Natural killer cell (primary cell): ENCODE measurements at regions of chr15 and their contacts with region 1.

Region 1: DNA sequence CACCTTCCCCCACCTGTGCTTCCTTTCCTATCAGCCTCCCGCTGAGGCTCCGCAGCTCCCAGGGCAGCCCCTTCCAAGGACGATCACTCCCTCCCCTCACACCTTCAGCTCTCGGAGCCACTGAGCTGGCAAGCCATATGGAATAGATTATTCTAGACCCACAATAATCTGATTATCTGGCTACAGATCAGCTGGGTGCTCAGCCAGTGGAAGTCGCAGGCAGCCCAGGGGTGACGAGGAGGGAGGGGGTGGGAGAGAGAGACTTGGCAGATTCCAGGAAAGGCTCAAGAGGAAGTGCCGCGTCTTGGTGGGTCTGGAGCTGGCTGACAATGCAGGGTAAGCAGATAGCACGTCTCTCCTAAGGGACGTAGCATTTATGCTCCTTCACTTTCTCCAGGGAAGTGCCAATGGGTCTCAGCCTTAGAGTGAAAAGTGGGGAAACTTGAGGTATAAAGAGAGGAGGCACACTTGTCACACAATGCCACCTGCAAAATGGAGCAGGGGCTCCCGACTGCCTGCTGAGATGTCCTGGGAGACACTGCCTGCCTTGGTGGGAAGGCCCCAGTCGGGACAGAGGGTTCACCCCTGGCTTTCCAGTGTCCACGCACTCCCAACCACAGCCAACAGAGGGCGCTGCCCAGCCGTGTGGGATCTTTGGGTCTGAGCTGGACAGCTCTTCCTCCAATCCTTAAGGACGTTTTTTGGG is 9.4 kb upstream of the MESP1 start:
- DNase-seq: peak; percentile 73 to 76
- ATAC-seq: peak; percentile 85 to 94 (median 91)
- H3K4me3 ChIP-seq: no peak overlapping the region
- H3K4me3 Mint-ChIP-seq: no peak overlapping the region
- H3K27ac ChIP-seq: no peak overlapping the region
- H3K27ac Mint-ChIP-seq: no peak overlapping the region
- H3K4me1 ChIP-seq: no peaks in the 10 kb centered on the region
- H3K4me1 Mint-ChIP-seq: peaks cover 0 to 4% of the 10 kb centered on the region in 2 donors
- H3K27me3 ChIP-seq: no peaks in the 10 kb centered on the region
- H3K27me3 Mint-ChIP-seq: peaks cover 0 to 7% of the 10 kb centered on the region in 2 donors
- CTCF ChIP-seq: peak; percentile 86

Region 2: GRCh38 chr15:89874926-89875564 is 114.6 kb after region 1 on chr15:
- intact Hi-C with region 1: loop called (anchors 2 kb)
- DNase-seq: peak; percentile 72 to 89
- ATAC-seq: peak; percentile 98 to 100 (median 100)
- H3K4me3 ChIP-seq: no peak overlapping the region
- H3K4me3 Mint-ChIP-seq: no peak overlapping the region
- H3K27ac ChIP-seq: no peak overlapping the region
- H3K27ac Mint-ChIP-seq: no peak overlapping the region
- H3K4me1 ChIP-seq: peaks cover 3% of the 10 kb centered on the region
- H3K4me1 Mint-ChIP-seq: peaks cover 4 to 5% of the 10 kb centered on the region in 2 donors
- H3K27me3 ChIP-seq: no peaks in the 10 kb centered on the region
- H3K27me3 Mint-ChIP-seq: no peaks in the 10 kb centered on the region
- CTCF ChIP-seq: peak; percentile 97

Region 3: GRCh38 chr15:90086868-90087268 is 326.4 kb after region 1 on chr15:
- intact Hi-C with region 1: loop called (anchors 2 kb)
- DNase-seq: peak; percentile 44 to 70
- ATAC-seq: peak; percentile 76 to 92 (median 83)
- H3K4me3 ChIP-seq: no peak overlapping the region
- H3K4me3 Mint-ChIP-seq: no peak overlapping the region
- H3K27ac ChIP-seq: no peak overlapping the region
- H3K27ac Mint-ChIP-seq: peak overlapping the region; percentile 58 to 75
- H3K4me1 ChIP-seq: peaks cover 5% of the 10 kb centered on the region
- H3K4me1 Mint-ChIP-seq: peaks cover 8 to 15% of the 10 kb centered on the region in 2 donors
- H3K27me3 ChIP-seq: no peaks in the 10 kb centered on the region
- H3K27me3 Mint-ChIP-seq: no peaks in the 10 kb centered on the region
- CTCF ChIP-seq: peak; percentile 69

Region 4: DNA sequence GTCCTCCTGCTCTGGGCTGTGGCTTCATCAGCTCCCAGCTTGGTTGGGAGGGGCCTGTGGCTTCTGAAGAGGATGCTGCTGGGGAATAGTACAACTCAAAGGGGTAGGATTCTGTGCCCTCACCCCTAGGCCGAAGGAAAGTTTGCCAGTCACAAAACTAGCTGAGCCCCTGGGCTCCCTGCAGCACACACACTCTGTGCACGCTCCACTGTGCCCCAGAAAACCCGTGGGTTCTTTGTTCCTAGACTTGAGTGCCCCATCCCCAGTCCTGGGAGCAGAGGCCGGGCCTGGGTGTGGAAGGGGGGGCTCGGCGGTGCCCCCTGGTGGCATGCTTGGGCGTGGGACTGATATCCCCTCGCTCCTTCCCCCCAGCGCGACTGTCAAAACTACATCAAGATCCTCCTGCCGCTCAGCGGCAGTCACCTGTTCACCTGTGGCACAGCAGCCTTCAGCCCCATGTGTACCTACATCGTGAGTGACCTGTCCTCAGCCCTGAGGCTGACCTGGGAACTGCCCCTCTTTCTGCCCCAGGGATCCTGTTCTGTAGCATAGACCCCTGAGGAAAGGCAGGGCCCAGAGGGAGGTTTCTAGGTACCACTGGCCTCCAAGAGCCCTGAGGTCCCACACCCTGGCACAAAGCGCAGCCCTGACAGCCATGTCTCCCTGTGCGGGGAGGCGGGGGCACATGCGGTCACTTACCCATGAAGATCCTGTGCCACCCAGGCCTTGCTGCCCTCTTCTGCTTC is 459.1 kb after region 1 on chr15:
- intact Hi-C with region 1: loop called (anchors 5 kb)
- DNase-seq: peak; percentile 43 to 77
- ATAC-seq: peak in 2 of 3 donors; percentile 82 to 84
- H3K4me3 ChIP-seq: no peak overlapping the region
- H3K4me3 Mint-ChIP-seq: no peak overlapping the region
- H3K27ac ChIP-seq: no peak overlapping the region
- H3K27ac Mint-ChIP-seq: no peak overlapping the region
- H3K4me1 ChIP-seq: peaks cover 10% of the 10 kb centered on the region
- H3K4me1 Mint-ChIP-seq: peaks cover 4 to 5% of the 10 kb centered on the region in 2 donors
- H3K27me3 ChIP-seq: no peaks in the 10 kb centered on the region
- H3K27me3 Mint-ChIP-seq: no peaks in the 10 kb centered on the region
- CTCF ChIP-seq: peak; percentile 59